ENCODE measurements at regions of chr2 and their contacts with region 1.

Region 1: GRCh38 chr2:223993621-223994232 is 36.5 kb downstream of the MRPL44 start:
- DNase-seq: peak; percentile 32 to 82 (median 50)
- ATAC-seq: peak; percentile 78
- H3K4me3 ChIP-seq: no peak overlapping the region
- H3K4me3 Mint-ChIP-seq: no peak overlapping the region
- H3K27ac ChIP-seq: no peak overlapping the region
- H3K27ac Mint-ChIP-seq: no peak overlapping the region
- H3K4me1 ChIP-seq: no peaks in the 10 kb centered on the region
- H3K4me1 Mint-ChIP-seq: no peaks in the 10 kb centered on the region
- H3K27me3 ChIP-seq: no peaks in the 10 kb centered on the region
- H3K27me3 Mint-ChIP-seq: no peaks in the 10 kb centered on the region
- CTCF ChIP-seq: peak; percentile 76

Region 2: GRCh38 chr2:223970343-223971128 is 23.2 kb before region 1 on chr2:
- CTCF ChIA-PET with region 1: interaction called, 17 read pairs
- POLR2A ChIA-PET with region 1: interaction called, 6 read pairs
- intact Hi-C with region 1: loop called in 1 of 2 experiments (anchors 1 kb)
- DNase-seq: peak in 12 of 14 experiments; percentile 14 to 81 (median 40)
- ATAC-seq: peak; percentile 76
- H3K4me3 ChIP-seq: no peak overlapping the region
- H3K4me3 Mint-ChIP-seq: no peak overlapping the region
- H3K27ac ChIP-seq: no peak overlapping the region
- H3K27ac Mint-ChIP-seq: no peak overlapping the region
- H3K4me1 ChIP-seq: no peaks in the 10 kb centered on the region
- H3K4me1 Mint-ChIP-seq: peaks cover 4% of the 10 kb centered on the region
- H3K27me3 ChIP-seq: no peaks in the 10 kb centered on the region
- H3K27me3 Mint-ChIP-seq: no peaks in the 10 kb centered on the region
- CTCF ChIP-seq: peak; percentile 96

Region 3: GRCh38 chr2:224039941-224040440 is 46.3 kb after region 1 on chr2:
- CTCF ChIA-PET with region 1: interaction called, 6 read pairs
- POLR2A ChIA-PET with region 1: no interaction called
- intact Hi-C with region 1: loop called in 1 of 2 experiments (anchors 5 kb)
- DNase-seq: no peak
- ATAC-seq: no peak
- H3K4me3 ChIP-seq: peak overlapping the region; percentile 40
- H3K4me3 Mint-ChIP-seq: peak overlapping the region; percentile 73
- H3K27ac ChIP-seq: no peak overlapping the region
- H3K27ac Mint-ChIP-seq: no peak overlapping the region
- H3K4me1 ChIP-seq: peaks cover 12% of the 10 kb centered on the region
- H3K4me1 Mint-ChIP-seq: peaks cover 23% of the 10 kb centered on the region
- H3K27me3 ChIP-seq: peaks cover 12 to 25% of the 10 kb centered on the region in 2 experiments
- H3K27me3 Mint-ChIP-seq: peaks cover 57% of the 10 kb centered on the region
- CTCF ChIP-seq: no peak

Region 4: DNA sequence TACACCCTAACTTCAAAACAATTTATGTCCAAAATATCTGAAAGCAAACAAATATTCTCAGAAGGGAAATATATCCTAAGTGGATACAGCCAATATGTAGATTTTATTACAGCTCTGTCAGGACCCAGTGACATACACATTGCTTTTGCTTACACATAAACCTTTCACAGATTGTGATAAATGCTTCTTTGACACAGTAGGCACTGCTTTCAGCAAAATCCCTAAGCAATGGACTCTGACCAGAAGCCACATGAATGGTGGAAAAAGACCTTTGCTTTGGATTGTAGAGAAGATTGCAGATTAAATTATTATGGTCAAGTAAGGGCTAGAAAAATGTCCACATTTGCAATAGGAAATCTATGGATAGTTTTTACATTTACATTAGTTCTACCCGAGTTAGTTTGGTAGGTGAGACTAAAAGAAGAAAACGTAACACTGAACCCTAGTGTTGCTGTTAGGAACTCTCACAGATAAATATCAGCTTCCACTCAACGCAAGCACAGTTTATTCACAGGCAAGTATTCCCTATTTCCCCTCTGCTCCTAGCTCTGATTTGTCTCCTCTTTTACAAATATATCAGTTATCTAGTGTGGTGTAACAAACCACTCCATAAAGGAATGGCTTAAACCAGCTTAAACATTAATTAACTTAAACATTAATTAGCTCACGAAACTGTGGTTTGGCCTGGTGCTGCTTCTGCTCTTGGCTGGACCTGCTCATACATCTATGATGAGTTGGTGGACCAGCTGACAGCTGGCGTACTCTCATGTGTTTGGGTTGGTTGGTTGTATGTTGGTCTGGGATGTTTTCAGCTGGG is 69.0 kb after region 1 on chr2:
- CTCF ChIA-PET with region 1: interaction called, 10 read pairs
- POLR2A ChIA-PET with region 1: no interaction called
- intact Hi-C with region 1: loop called (anchors 1 kb)
- DNase-seq: peak in 1 of 14 experiments; percentile 13
- ATAC-seq: no peak
- H3K4me3 ChIP-seq: no peak overlapping the region
- H3K4me3 Mint-ChIP-seq: no peak overlapping the region
- H3K27ac ChIP-seq: no peak overlapping the region
- H3K27ac Mint-ChIP-seq: no peak overlapping the region
- H3K4me1 ChIP-seq: no peaks in the 10 kb centered on the region
- H3K4me1 Mint-ChIP-seq: no peaks in the 10 kb centered on the region
- H3K27me3 ChIP-seq: no peaks in the 10 kb centered on the region
- H3K27me3 Mint-ChIP-seq: no peaks in the 10 kb centered on the region
- CTCF ChIP-seq: peak; percentile 21

Region 5: GRCh38 chr2:224284134-224284946 is 290.6 kb after region 1 on chr2:
- CTCF ChIA-PET with region 1: interaction called, 18 read pairs
- POLR2A ChIA-PET with region 1: interaction called, 4 read pairs
- intact Hi-C with region 1: loop called (anchors 1 kb)
- DNase-seq: peak in 5 of 14 experiments; percentile 2 to 60 (median 44)
- ATAC-seq: no peak
- H3K4me3 ChIP-seq: no peak overlapping the region
- H3K4me3 Mint-ChIP-seq: no peak overlapping the region
- H3K27ac ChIP-seq: no peak overlapping the region
- H3K27ac Mint-ChIP-seq: no peak overlapping the region
- H3K4me1 ChIP-seq: no peaks in the 10 kb centered on the region
- H3K4me1 Mint-ChIP-seq: no peaks in the 10 kb centered on the region
- H3K27me3 ChIP-seq: peaks cover under 1 to 18% of the 10 kb centered on the region in 2 experiments
- H3K27me3 Mint-ChIP-seq: peaks cover 40% of the 10 kb centered on the region
- CTCF ChIP-seq: peak; percentile 62

Region 6: GRCh38 chr2:224369028-224369632 is 375.4 kb after region 1 on chr2:
- CTCF ChIA-PET with region 1: no interaction called
- POLR2A ChIA-PET with region 1: no interaction called
- intact Hi-C with region 1: loop called in 1 of 2 experiments (anchors 2 kb)
- DNase-seq: peak in 4 of 14 experiments; percentile 19 to 64 (median 46)
- ATAC-seq: no peak
- H3K4me3 ChIP-seq: no peak overlapping the region
- H3K4me3 Mint-ChIP-seq: no peak overlapping the region
- H3K27ac ChIP-seq: no peak overlapping the region
- H3K27ac Mint-ChIP-seq: no peak overlapping the region
- H3K4me1 ChIP-seq: peaks cover 4% of the 10 kb centered on the region
- H3K4me1 Mint-ChIP-seq: no peaks in the 10 kb centered on the region
- H3K27me3 ChIP-seq: no peaks in the 10 kb centered on the region
- H3K27me3 Mint-ChIP-seq: no peaks in the 10 kb centered on the region
- CTCF ChIP-seq: peak; percentile 75

Region 7: DNA sequence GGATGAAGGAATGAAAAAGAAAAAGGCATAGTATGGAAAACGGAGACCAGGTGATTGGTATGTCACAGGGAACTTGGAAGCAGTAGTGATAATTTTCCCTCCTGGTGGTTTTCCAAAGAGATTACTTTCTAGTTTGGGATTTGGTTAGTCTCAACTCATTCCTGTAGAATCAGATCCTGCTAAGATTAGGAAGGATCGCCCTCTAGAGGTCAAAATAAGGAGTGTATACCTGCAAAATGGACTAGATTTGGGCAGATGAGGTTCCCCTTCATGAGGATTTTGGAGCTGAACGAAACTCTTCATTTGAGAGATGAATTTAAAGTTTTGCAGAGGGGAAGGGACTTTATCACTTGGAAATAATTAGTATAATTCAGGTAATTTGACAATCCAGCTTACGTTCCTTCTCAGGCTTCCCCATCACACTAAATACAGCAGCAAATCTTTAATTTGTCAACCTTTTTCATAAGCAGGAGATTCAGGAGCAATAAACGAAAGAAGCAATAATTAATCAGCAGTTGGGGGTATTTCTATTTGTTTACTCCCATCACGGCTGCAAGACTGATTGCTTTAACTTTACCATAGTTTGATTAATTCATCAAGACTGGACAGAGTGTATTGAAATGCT is 657.2 kb after region 1 on chr2:
- CTCF ChIA-PET with region 1: no interaction called
- POLR2A ChIA-PET with region 1: no interaction called
- intact Hi-C with region 1: loop called (anchors 10 kb)
- DNase-seq: peak in 4 of 14 experiments; percentile 7 to 74 (median 64)
- ATAC-seq: peak; percentile 57
- H3K4me3 ChIP-seq: no peak overlapping the region
- H3K4me3 Mint-ChIP-seq: no peak overlapping the region
- H3K27ac ChIP-seq: no peak overlapping the region
- H3K27ac Mint-ChIP-seq: no peak overlapping the region
- H3K4me1 ChIP-seq: no peaks in the 10 kb centered on the region
- H3K4me1 Mint-ChIP-seq: peaks cover 4% of the 10 kb centered on the region
- H3K27me3 ChIP-seq: no peaks in the 10 kb centered on the region
- H3K27me3 Mint-ChIP-seq: peaks cover 7% of the 10 kb centered on the region
- CTCF ChIP-seq: peak; percentile 87

Measured in CD4-positive, alpha-beta T cell (primary cell).